Activated naive CD4-positive, alpha-beta T cell treated with anti-CD3 and anti-CD28 coated beads for 36 hours (primary cell): ENCODE measurements at regions of chr3 and their contacts with region 1.

Region 1: DNA sequence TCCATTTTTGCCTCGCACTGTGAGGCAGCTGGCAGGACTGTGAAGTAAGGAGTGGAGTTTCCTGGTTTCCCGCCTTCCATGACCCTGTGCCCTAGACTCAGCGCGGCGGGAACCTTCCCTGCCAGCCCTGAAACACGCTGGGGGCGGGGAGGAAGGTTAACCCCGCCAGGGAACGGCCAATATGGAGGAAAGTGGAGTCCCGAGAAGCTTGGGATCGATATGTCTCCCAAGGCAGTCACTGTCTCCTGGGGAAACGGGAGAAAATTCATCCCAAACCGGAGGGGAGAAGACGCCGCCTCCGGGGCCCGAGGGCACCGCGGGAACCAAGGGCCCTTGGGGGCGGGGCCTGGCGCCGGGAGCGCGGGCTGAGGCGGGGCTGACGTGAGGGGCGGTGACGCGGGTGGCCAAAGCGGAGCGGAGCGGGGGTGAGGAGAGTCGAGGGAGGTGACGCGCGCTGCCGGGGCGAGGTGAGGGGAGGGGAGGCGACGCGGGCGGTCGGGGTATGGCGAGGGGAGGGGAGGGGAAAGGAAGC is at the start of gene HMCES:
- DNase-seq: peak; percentile 96
- H3K4me3 Mint-ChIP-seq: peak within 1 kb of the TSS; percentile 87
- H3K27ac Mint-ChIP-seq: peak within 1 kb of the TSS; percentile 90
- H3K4me1 Mint-ChIP-seq: peaks cover 48% of the 10 kb centered on the region
- H3K27me3 Mint-ChIP-seq: no peaks in the 10 kb centered on the region
- total RNA-seq, gene HMCES: 35.0 to 35.8 TPM

Region 2: DNA sequence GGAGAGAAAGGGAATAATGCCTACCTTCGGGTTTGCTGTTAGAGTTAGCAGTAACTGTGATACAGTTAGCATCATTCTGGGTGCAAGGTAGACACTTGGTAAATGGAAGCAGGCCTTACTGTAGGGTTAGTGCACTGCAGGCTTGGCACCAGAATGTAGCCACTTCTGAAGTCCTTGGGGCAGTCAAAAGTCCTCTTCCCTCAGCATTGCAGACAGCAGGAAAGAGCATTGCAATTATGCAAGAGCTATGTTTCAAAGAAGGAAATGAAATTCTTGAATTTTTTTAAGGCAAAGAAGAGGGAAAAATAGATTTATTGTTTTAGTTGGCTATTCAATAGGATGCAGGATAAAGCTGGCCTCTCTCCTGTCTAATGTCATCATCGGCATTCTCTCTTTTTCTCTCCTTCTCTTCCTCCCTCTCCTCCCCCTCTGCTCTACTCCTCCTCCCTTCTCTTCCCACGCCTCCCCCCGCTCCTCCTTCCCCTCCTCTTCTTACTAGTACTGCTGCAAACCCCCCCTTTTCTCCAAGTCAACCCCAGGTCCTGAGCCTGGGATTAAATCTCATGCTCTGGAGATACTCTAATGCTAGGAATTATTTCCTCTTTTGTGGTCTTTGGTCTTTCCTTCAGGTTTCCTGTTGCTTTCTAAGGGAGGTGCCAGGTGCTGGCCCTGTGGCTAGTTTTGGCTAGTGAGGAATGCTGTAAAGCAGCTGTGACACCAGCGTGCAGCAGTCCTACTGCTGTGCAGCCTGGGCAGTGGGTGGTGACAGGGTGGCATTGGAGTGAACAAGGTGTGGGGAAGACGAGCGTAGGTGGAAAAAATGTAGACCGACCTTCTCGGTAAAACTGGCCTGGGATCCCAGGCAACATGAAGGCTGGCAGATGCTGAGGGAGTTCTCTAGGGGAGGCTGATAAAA is 1103.6 kb before region 1 on chr3:
- CTCF ChIA-PET with region 1: no interaction called
- intact Hi-C with region 1: no loop called
- DNase-seq: no peak
- H3K4me3 Mint-ChIP-seq: no peak overlapping the region
- H3K27ac Mint-ChIP-seq: no peak overlapping the region
- H3K4me1 Mint-ChIP-seq: peaks cover 45% of the 10 kb centered on the region
- H3K27me3 Mint-ChIP-seq: no peaks in the 10 kb centered on the region

Region 3: GRCh38 chr3:128787256-128788240 is 491.0 kb before region 1 on chr3:
- CTCF ChIA-PET with region 1: no interaction called
- intact Hi-C with region 1: loop called (anchors 2 kb)
- DNase-seq: peak; percentile 69
- H3K4me3 Mint-ChIP-seq: peak overlapping the region; percentile 76
- H3K27ac Mint-ChIP-seq: peak overlapping the region; percentile 99
- H3K4me1 Mint-ChIP-seq: peaks cover 98% of the 10 kb centered on the region
- H3K27me3 Mint-ChIP-seq: no peaks in the 10 kb centered on the region

Region 4: DNA sequence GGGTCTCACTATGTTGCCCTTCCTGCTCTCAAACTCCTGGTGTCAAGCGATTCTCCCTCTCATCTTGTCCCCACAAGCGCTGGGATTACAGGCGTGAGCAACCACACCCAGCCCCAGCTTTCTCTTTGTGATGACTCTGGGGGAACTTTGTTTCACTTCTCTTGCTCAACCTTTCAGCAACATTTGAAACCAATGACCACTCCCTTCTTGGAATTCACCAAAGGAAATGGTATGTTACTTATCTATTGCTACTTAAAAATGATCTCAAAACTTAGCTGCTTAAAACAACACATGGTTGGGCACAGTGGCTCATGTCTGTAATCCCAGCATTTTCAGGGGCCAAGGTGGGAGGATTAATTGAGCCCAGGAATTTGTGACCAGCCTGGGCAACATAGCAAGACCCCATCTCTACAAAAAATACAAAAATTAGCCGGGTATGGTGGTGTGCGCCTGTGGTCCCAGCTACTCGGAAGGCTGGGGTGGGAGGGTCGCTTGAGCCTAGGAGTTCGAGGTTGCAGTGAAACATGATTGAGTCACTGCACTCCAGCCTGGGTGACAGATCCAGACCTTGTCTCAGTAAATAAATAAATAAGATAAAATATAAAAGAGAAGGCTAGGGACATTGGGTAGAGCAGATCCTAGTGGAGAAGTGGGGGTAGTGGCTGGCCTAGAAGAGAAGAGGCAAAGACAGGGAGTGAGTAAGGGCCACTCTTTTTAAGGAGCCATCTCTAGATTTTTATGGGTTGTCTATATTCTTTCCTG is 39.4 kb before region 1 on chr3:
- CTCF ChIA-PET with region 1: no interaction called
- intact Hi-C with region 1: no loop called
- DNase-seq: peak; percentile 43
- H3K4me3 Mint-ChIP-seq: no peak overlapping the region
- H3K27ac Mint-ChIP-seq: peak overlapping the region; percentile 31
- H3K4me1 Mint-ChIP-seq: peaks cover 14% of the 10 kb centered on the region
- H3K27me3 Mint-ChIP-seq: no peaks in the 10 kb centered on the region

Region 5: DNA sequence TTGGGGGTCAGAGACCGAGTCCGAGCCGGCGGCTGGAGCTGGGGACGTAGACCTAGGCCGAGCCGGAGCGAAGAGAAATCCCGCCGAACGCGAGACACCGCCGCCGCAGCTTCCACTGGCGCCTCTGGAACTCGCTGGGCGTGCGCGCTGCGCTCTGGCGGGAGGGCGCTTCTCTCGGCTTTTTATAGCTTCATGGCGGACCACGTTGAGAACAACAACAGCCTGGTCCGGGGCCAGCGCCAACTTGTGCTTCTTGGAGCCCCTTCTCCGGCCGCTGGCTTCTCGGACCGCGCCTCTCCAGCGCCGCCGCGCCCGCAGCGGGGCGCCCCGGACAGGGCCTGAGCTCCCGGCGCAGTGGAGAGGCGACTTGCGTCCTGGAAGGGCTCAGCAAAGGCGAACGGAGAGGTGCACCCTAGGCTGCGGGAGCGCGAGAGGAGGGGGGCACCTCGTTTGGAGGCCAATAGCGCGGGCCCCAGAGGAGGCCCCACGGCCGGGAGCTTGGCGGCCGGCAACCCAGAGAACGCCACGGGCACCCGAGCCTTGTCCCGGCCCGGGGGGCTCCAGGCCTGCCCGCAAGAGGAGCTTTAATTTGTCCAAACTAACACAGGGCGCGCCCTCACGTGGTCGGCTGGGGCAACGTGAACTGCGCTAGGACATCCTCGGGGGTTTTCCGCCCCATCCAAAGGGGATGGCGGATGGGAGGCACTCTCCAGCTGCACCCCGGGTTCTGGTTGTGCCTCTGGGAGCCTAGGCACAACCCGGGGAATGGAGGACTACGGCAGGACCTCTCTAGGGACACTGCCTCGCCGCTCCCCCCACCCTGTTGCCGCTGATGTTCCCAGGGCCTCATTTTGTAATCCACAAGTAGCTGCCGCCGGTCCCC is 37.9 kb after region 1 on chr3:
- CTCF ChIA-PET with region 1: interaction called, 15 read pairs
- intact Hi-C with region 1: loop called (anchors 1 kb)
- DNase-seq: peak; percentile 87
- H3K4me3 Mint-ChIP-seq: peak overlapping the region; percentile 96
- H3K27ac Mint-ChIP-seq: peak overlapping the region; percentile 85
- H3K4me1 Mint-ChIP-seq: peaks cover 14% of the 10 kb centered on the region
- H3K27me3 Mint-ChIP-seq: no peaks in the 10 kb centered on the region